Vagina (tissue), 2 donors: ENCODE measurements at regions of chr17 and their contacts with region 1.

Region 1: DNA sequence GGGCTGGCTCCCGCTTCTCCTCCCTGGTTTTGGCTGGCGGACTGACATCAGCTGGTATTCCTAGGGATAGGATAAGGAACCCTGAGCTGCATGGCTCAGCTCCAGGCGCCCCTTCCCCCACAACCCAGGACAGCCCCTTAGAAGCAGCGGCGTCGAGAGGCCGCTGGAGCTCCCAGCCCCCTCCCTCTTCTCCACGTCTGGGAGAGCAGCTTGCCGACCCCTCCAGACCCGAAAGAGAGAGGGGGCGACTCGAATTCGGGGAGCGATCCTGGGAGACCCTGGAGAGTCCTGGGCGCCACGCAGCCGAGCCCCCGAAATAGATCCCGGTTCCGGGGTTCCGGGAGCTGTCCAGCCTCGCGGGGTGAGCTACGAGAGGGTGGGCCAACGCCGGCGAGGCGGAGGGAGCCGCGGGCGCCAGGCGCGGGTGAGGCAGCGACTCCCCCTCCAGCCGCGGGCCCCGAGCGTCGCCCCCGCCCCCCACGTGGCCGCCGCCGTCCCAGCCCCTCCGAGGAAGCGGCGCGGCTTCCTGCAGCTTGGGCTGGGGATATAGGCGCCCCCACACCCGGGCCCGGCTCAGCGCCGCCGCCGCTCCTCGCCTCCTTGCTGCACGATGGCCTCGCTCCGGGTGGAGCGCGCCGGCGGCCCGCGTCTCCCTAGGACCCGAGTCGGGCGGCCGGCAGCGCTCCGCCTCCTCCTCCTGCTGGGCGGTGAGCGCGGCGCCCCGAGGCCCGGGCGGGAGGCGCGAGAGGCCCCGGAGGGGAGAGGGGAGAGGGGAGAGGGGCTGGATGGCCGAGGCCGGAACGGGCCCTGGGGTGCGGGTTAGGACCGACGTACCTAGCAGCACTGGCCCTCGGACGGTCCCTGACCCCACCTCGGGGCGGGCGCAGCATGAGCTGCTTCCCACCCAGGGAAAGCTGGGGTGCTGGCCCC is at the start of gene RAMP2:
- DNase-seq: no peak
- H3K4me3 ChIP-seq: peak within 1 kb of the TSS; percentile 57 to 78
- H3K27ac ChIP-seq: peak within 1 kb of the TSS; percentile 84
- H3K4me1 ChIP-seq: peaks cover 19% of the 10 kb centered on the region
- H3K27me3 ChIP-seq: no peaks in the 10 kb centered on the region
- CTCF ChIP-seq: no peak
- POLR2A ChIP-seq: no peak
- total RNA-seq, gene RAMP2: 27.3 TPM

Region 2: GRCh38 chr17:42577532-42578281 is 183.2 kb before region 1 on chr17 and contains the start of gene PSMC3IP:
- intact Hi-C with region 1: loop called (anchors 10 kb)
- DNase-seq: peak in 1 of 2 donors; percentile 96
- H3K4me3 ChIP-seq: peak within 1 kb of the TSS; percentile 59 to 66
- H3K27ac ChIP-seq: peak within 1 kb of the TSS; percentile 75
- H3K4me1 ChIP-seq: peaks cover 21% of the 10 kb centered on the region
- H3K27me3 ChIP-seq: no peaks in the 10 kb centered on the region
- CTCF ChIP-seq: peak in 2 of 3 experiments; percentile 14 to 25
- POLR2A ChIP-seq: peak in 1 of 2 donors; percentile 56
- total RNA-seq, gene PSMC3IP: 0.98 TPM

Region 3: GRCh38 chr17:42704837-42705494 is 56.0 kb before region 1 on chr17:
- intact Hi-C with region 1: loop called (anchors 1 kb)
- DNase-seq: no peak
- H3K4me3 ChIP-seq: no peak overlapping the region
- H3K27ac ChIP-seq: no peak overlapping the region
- H3K4me1 ChIP-seq: peaks cover 2% of the 10 kb centered on the region
- H3K27me3 ChIP-seq: no peaks in the 10 kb centered on the region
- CTCF ChIP-seq: no peak
- POLR2A ChIP-seq: no peak

Region 4: DNA sequence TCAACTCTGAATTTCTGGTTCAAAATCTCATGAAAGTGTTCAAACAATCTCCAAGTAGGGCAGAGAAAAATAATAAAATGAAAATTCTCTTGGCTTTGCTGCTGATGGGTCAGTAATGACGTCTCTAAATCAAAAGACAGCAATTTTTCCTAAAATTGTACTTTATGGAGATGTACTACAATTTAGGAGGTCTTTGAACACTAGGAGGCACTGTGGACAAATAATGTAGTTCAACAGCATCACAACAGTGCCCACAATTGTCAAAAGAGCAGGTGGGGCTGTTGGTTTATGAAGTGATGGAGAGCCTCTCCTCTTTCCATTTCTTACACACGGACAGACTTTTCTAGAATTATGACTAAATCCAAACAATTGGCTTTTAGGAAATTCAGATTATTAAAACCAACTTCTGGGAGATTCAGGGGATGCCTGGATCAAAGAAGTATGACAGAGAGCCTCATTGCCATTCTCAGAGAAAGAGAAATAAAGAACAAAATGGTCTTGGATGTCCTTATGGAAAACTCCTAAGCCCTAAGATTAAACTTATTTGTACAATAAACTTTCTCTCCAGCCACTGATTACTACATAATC is 39.8 kb before region 1 on chr17:
- intact Hi-C with region 1: loop called (anchors 2 kb)
- DNase-seq: no peak
- H3K4me3 ChIP-seq: no peak overlapping the region
- H3K27ac ChIP-seq: no peak overlapping the region
- H3K4me1 ChIP-seq: no peaks in the 10 kb centered on the region
- H3K27me3 ChIP-seq: no peaks in the 10 kb centered on the region
- CTCF ChIP-seq: peak; percentile 54 to 73 (median 57)
- POLR2A ChIP-seq: no peak

Region 5: DNA sequence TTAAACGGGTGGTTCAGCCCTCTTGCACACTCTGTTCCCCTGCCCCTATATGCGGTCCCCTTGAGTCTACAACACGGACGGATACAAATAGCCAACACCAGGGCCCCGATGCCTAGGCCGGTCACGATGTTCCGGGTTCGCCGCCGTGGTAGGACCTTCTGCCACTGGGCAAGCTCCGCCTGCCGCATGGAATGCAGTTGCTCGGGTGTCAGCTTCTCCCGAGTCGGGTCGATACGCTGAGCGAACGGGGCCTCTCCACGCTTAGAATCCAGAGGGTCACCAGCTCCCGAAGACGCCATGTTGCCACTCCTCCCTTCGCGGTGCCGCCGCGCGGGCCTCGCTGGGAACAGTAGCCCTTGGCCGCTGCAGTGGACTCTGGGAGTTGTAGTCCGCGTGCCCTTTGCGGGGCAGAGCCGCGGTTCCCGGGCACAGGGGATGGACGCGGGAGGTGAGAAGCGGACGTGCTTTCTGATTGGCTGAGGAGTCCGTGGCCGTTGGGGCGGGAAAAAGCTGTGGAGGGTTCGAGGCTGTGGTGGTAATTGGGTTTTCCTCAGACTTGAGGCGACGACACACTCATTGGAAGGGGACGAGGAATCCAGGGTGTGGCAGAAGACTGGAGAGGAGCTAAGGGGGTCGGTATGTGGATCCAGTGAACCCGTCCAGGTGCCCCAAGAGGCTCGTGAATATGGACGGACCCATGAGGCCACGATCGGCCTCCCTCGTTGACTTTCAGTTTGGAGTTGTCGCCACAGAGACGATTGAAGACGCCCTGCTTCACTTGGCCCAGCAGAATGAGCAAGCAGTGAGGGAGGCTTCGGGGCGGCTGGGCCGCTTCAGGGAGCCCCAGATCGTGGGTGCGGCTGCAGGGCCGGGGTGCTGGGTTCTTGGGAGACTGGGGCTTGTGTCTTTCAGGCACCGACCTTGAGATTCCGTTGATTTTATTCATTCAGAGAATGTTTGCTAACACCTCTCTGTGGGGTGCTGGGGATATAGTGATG is 37.8 kb after region 1 on chr17 and contains the starts of genes CNTD1 and COA3:
- intact Hi-C with region 1: no loop called
- DNase-seq: no peak
- H3K4me3 ChIP-seq: peak within 1 kb of the TSS; percentile 74 to 83
- H3K27ac ChIP-seq: peak within 1 kb of the TSS; percentile 74
- H3K4me1 ChIP-seq: peaks cover 31% of the 10 kb centered on the region
- H3K27me3 ChIP-seq: no peaks in the 10 kb centered on the region
- CTCF ChIP-seq: no peak
- POLR2A ChIP-seq: no peak
- total RNA-seq, gene CNTD1: not detected
- total RNA-seq, gene COA3: 89.4 TPM

Region 6: DNA sequence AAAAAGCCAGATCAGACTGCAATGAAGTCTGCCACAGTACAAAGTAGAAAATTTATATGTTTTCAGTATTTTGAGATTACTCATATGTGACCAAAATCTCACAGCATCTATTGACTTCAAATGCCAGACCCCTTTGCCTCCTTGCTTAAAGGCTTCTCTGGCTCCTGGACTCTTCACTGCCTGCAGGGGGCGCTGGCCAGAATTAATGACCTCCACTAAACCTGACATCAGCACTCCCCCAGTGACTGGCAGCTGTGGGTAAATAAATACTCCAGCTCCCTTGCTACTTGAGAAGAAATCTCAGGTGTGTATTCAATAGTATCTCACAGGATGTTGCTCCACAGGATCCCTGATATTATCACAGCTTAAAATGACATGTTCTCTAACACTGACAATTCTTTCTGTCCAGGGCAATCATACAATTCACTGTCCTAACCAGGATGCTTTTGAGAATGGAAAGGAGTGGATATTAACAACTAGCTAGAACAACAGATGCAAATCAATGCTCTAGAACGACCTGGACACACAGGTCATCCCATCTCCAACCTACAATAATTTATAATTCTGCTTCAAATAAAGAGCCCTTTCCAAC is 59.1 kb after region 1 on chr17:
- intact Hi-C with region 1: loop called (anchors 10 kb)
- DNase-seq: no peak
- H3K4me3 ChIP-seq: no peak overlapping the region
- H3K27ac ChIP-seq: no peak overlapping the region
- H3K4me1 ChIP-seq: peaks cover 25% of the 10 kb centered on the region
- H3K27me3 ChIP-seq: no peaks in the 10 kb centered on the region
- CTCF ChIP-seq: no peak
- POLR2A ChIP-seq: no peak